Activated CD4-positive, alpha-beta memory T cell treated with anti-CD3 and anti-CD28 coated beads for 36 hours (primary cell): ENCODE measurements at regions of chr22 and their contacts with region 1.

Region 1: GRCh38 chr22:24270638-24271408 is at the start of gene SPECC1L:
- DNase-seq: peak; percentile 94
- H3K4me3 Mint-ChIP-seq: peak within 1 kb of the TSS; percentile 82
- H3K27ac Mint-ChIP-seq: peak within 1 kb of the TSS; percentile 82
- H3K4me1 Mint-ChIP-seq: peaks cover 39% of the 10 kb centered on the region
- H3K27me3 Mint-ChIP-seq: no peaks in the 10 kb centered on the region
- total RNA-seq, gene SPECC1L: 27.7 to 34.3 TPM

Region 2: GRCh38 chr22:23922651-23923320 is 348.0 kb before region 1 on chr22:
- CTCF ChIA-PET with region 1: no interaction called
- POLR2A ChIA-PET with region 1: no interaction called
- intact Hi-C with region 1: no loop called
- DNase-seq: no peak
- H3K4me3 Mint-ChIP-seq: no peak overlapping the region
- H3K27ac Mint-ChIP-seq: no peak overlapping the region
- H3K4me1 Mint-ChIP-seq: no peaks in the 10 kb centered on the region
- H3K27me3 Mint-ChIP-seq: no peaks in the 10 kb centered on the region

Region 3: DNA sequence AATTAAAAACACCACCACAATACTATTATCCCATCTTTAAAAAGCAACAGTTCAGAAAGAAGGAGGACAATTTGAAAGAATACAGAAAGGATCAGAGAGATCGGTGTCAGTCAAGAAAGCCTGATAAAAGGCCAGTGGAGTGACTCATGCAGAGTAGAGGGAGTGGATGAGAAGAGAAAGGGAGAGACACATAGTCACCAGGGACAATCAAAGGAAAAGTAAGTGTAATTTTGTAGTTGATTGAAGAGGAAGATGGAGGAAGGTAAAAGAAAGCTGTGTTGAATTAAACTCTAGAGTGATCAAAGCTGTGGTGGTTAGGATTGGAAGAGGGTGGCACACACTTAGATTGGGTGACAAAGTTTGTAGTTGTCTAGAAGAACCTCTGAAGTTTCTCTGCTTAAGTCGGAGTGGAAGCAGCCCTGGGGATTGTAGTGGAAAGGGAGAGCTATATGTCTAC is 14.0 kb after region 1 on chr22:
- CTCF ChIA-PET with region 1: interaction called, 14 read pairs
- POLR2A ChIA-PET with region 1: interaction called, 15 read pairs
- intact Hi-C with region 1: loop called (anchors 1 kb)
- DNase-seq: no peak
- H3K4me3 Mint-ChIP-seq: peak overlapping the region; percentile 2
- H3K27ac Mint-ChIP-seq: peak overlapping the region; percentile 53
- H3K4me1 Mint-ChIP-seq: peaks cover 43% of the 10 kb centered on the region
- H3K27me3 Mint-ChIP-seq: no peaks in the 10 kb centered on the region

Region 4: GRCh38 chr22:24305260-24305692 is 34.5 kb after region 1 on chr22:
- CTCF ChIA-PET with region 1: no interaction called
- POLR2A ChIA-PET with region 1: no interaction called
- intact Hi-C with region 1: loop called (anchors 1 kb)
- DNase-seq: peak; percentile 49
- H3K4me3 Mint-ChIP-seq: no peak overlapping the region
- H3K27ac Mint-ChIP-seq: peak overlapping the region; percentile 59
- H3K4me1 Mint-ChIP-seq: peaks cover 41% of the 10 kb centered on the region
- H3K27me3 Mint-ChIP-seq: no peaks in the 10 kb centered on the region